ENCODE measurements at regions of chr17 and their contacts with region 1.

Region 1: GRCh38 chr17:80866147-80866793 is 125.4 kb upstream of the CHMP6 start:
- DNase-seq: peak; percentile 51 to 74 (median 63)
- ATAC-seq: peak; percentile 90
- H3K4me3 ChIP-seq: no peak overlapping the region
- H3K27ac ChIP-seq: no peak overlapping the region
- H3K4me1 ChIP-seq: peaks cover 0 to 28% of the 10 kb centered on the region in 2 donors
- H3K27me3 ChIP-seq: no peaks in the 10 kb centered on the region
- CTCF ChIP-seq: peak; percentile 59 to 62

Region 2: DNA sequence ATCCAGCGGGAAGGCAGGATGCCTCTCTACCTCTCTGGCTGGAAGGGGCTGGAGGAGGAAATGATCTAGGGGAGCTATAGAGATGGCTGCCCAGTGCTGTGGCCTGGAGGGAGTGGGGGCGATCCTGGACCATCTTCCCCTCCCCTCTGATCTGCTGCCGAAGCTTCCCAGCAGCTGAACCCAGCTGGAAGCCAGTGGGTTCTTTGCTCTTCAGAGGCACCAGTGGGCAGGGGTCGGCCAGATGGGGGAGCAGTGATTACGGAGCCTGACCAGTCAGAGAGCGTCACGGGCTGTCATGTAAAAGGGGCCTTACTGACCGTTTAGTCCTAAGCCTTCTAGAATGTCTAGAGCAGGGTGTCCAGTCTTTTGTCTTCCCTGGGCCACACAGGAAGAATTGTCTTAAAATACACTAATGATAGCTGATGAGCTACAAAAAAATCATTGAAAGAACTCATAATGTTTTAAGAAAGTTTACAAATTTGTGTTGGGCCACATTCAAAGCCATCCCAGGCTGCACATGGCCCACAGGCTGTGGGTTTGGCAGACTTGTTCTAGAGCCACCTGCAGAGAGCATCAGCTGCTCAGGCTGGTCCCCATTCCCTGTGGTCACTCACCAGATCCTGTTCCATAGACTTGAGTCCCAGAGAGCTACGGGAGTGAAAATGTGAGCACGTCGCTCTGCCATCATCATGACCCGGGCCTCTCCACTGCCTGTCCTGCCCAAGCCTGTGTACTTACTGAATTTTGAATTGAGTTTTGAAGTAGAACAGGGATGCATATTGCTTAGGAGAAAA is 639.3 kb before region 1 on chr17:
- intact Hi-C with region 1: no loop called
- DNase-seq: peak in 1 of 4 donors; percentile 47
- ATAC-seq: no peak
- H3K4me3 ChIP-seq: no peak overlapping the region
- H3K27ac ChIP-seq: no peak overlapping the region
- H3K4me1 ChIP-seq: peaks cover 0 to 7% of the 10 kb centered on the region in 2 donors
- H3K27me3 ChIP-seq: no peaks in the 10 kb centered on the region
- CTCF ChIP-seq: no peak

Region 3: DNA sequence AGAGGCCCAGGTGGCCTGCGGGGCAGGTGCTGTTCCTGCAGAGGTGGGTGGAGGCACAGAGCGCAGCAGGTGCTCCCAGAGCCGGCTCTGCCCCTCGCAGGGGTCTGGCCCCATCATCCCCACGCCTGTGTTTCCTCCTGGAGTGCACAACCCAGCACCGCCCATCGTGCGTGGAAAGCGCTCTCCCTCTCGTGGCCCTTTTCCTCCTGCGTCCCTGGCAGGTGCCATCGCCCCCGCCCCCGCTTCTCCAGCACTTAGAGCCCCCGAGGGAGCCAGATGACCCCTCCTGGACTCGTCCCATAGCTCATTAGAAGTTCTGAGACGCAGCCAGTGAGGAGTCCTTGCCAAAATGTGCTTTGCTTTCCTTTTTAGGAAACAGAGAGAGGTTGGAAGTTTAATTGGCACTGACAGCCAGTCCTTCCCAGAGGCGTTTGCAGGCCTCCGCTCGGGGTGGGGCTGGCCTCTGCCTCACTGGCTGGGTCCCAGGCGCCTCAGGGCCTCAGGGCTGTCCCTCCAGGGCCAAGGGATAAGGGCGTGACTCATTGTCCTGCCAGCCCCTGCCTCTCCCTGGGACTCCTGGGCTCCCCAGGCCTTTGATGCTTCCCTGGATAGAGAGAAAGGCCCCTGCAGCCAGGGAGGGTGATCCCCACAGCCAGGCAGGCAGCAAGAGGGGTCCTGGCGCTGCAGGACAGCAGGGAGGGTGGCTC is 93.2 kb after region 1 on chr17:
- intact Hi-C with region 1: loop called in 1 of 2 experiments (anchors 10 kb)
- DNase-seq: peak in 3 of 4 donors; percentile 72 to 87 (median 77)
- ATAC-seq: peak; percentile 61
- H3K4me3 ChIP-seq: no peak overlapping the region
- H3K27ac ChIP-seq: no peak overlapping the region
- H3K4me1 ChIP-seq: peaks cover 0 to 10% of the 10 kb centered on the region in 2 donors
- H3K27me3 ChIP-seq: no peaks in the 10 kb centered on the region
- CTCF ChIP-seq: no peak